Mammary epithelial cell (primary cell): ENCODE measurements at regions of chr10 and their contacts with region 1.

Region 1: DNA sequence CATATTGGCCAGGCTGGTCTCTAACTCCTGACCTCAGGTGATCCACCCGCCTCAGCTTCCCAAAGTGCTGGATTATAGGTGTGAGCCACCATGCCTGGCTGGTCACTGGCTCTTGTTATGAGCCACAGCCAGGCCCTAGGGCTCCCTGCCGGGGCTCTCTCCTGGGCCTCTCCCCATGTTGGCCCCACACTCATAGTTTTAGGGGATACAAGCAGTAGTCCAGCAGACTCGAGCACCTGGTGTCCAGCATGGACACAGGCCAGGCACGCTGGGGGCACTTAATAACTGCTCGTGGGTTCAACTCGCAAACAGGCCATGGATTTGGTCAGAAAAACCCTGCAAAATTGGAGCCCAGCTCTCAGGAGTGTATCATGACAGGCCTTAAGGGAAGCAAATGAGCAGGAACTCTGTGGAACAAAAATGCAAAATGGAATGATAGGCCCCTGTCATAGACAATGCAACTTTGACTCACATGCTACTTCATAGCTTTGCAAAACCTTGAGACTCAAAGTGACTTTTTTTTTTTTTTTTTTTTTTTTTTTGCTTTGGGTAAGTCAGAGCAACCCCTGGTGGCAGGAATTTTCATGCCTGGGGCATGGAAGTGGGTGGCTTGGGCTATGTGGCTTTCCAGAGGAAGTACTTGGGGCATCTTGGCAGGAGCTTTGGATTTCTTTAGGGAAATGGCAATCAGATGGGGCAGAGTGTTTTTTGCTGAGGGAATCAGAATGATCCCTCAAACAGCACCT is 62.5 kb downstream of the TACC2 start:
- DNase-seq: peak; percentile 73
- H3K4me3 ChIP-seq: no peak overlapping the region
- H3K27ac ChIP-seq: no peak overlapping the region
- H3K4me1 ChIP-seq: peaks cover 10% of the 10 kb centered on the region
- H3K27me3 ChIP-seq: no peaks in the 10 kb centered on the region
- CTCF ChIP-seq: peak; percentile 76 to 78

Region 2: GRCh38 chr10:121927841-121928527 is 123.4 kb before region 1 on chr10 and contains the start of gene ATE1:
- CTCF ChIA-PET with region 1: interaction called, 3 read pairs
- dilution Hi-C with region 1: no loop called
- in situ Hi-C with region 1: no loop called
- intact Hi-C with region 1: loop called (anchors 5 kb)
- DNase-seq: peak; percentile 93
- H3K4me3 ChIP-seq: peak within 1 kb of the TSS; percentile 80 to 98 (median 93)
- H3K27ac ChIP-seq: peak within 1 kb of the TSS; percentile 90
- H3K4me1 ChIP-seq: peaks cover 14% of the 10 kb centered on the region
- H3K27me3 ChIP-seq: no peaks in the 10 kb centered on the region
- CTCF ChIP-seq: peak in 1 of 2 donors; percentile 16
- total RNA-seq, gene ATE1: 22.0 to 23.9 TPM

Region 3: GRCh38 chr10:121974535-121975294 is 76.7 kb before region 1 on chr10 and contains the start of gene NSMCE4A:
- CTCF ChIA-PET with region 1: no interaction called
- dilution Hi-C with region 1: no loop called
- in situ Hi-C with region 1: no loop called
- intact Hi-C with region 1: loop called (anchors 2 kb)
- DNase-seq: peak; percentile 66
- H3K4me3 ChIP-seq: peak within 1 kb of the TSS; percentile 61 to 72 (median 62)
- H3K27ac ChIP-seq: peak within 1 kb of the TSS; percentile 65
- H3K4me1 ChIP-seq: peaks cover 10% of the 10 kb centered on the region
- H3K27me3 ChIP-seq: no peaks in the 10 kb centered on the region
- CTCF ChIP-seq: peak; percentile 47 to 64
- total RNA-seq, gene NSMCE4A: 14.5 to 28.6 TPM

Region 4: GRCh38 chr10:121994390-121994961 is 56.9 kb before region 1 on chr10:
- CTCF ChIA-PET with region 1: no interaction called
- dilution Hi-C with region 1: no loop called
- in situ Hi-C with region 1: no loop called
- intact Hi-C with region 1: loop called (anchors 2 kb)
- DNase-seq: peak; percentile 56
- H3K4me3 ChIP-seq: no peak overlapping the region
- H3K27ac ChIP-seq: peak overlapping the region; percentile 34
- H3K4me1 ChIP-seq: peaks cover 28% of the 10 kb centered on the region
- H3K27me3 ChIP-seq: no peaks in the 10 kb centered on the region
- CTCF ChIP-seq: no peak

Region 5: DNA sequence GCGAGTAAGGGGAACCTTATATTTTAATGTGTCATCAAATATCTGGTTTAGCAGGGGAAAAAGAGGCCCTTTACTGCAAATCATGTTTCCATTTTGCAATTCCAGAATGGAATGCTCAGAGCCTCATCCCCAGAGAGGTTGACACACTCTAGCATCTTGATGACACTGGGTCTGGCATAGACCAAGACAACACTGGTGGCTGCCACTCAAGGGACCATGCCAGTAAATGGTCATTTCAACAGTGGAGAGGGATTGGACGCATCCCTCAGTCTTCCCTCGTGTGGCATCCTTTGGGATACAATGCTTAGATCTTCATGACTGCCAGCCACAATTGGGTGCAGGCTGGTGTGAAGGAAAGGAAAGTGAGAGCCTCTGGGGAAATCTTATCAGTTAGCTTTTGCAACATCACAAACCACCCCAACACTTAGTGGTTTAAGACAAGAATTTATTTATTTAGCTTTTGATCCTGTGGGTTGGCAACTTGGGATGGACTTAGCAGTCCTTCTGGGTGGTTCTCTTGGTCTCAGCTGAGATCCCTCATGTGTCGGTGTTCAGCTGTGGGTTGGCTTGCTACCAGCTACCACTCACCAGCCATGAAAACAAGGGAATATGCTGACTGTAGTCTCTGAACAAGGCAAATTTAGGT is 40.9 kb before region 1 on chr10:
- CTCF ChIA-PET with region 1: no interaction called
- dilution Hi-C with region 1: no loop called
- in situ Hi-C with region 1: no loop called
- intact Hi-C with region 1: no loop called
- DNase-seq: no peak
- H3K4me3 ChIP-seq: no peak overlapping the region
- H3K27ac ChIP-seq: no peak overlapping the region
- H3K4me1 ChIP-seq: no peaks in the 10 kb centered on the region
- H3K27me3 ChIP-seq: no peaks in the 10 kb centered on the region
- CTCF ChIP-seq: no peak

Region 6: GRCh38 chr10:122089311-122090017 is 38.0 kb after region 1 on chr10:
- CTCF ChIA-PET with region 1: interaction called, 3 read pairs
- dilution Hi-C with region 1: no loop called
- in situ Hi-C with region 1: no loop called
- intact Hi-C with region 1: loop called (anchors 1 kb)
- DNase-seq: peak; percentile 93
- H3K4me3 ChIP-seq: no peak overlapping the region
- H3K27ac ChIP-seq: peak overlapping the region; percentile 42
- H3K4me1 ChIP-seq: peaks cover 52% of the 10 kb centered on the region
- H3K27me3 ChIP-seq: no peaks in the 10 kb centered on the region
- CTCF ChIP-seq: peak; percentile 11 to 35

Region 7: GRCh38 chr10:122213766-122214165 is 162.3 kb after region 1 on chr10:
- CTCF ChIA-PET with region 1: no interaction called
- dilution Hi-C with region 1: no loop called
- in situ Hi-C with region 1: no loop called
- intact Hi-C with region 1: loop called (anchors 10 kb)
- DNase-seq: no peak
- H3K4me3 ChIP-seq: no peak overlapping the region
- H3K27ac ChIP-seq: no peak overlapping the region
- H3K4me1 ChIP-seq: no peaks in the 10 kb centered on the region
- H3K27me3 ChIP-seq: no peaks in the 10 kb centered on the region
- CTCF ChIP-seq: no peak